ENCODE measurements at regions of chr19 and their contacts with region 1.

Region 1: GRCh38 chr19:49637821-49638738 is 1.9 kb downstream of the RRAS start:
- DNase-seq: peak in 1 of 2 donors; percentile 94
- H3K4me3 ChIP-seq: peak overlapping the region; percentile 78 to 99
- H3K27ac ChIP-seq: peak overlapping the region; percentile 100
- H3K4me1 ChIP-seq: peaks cover 46% of the 10 kb centered on the region
- H3K27me3 ChIP-seq: no peaks in the 10 kb centered on the region
- CTCF ChIP-seq: no peak
- POLR2A ChIP-seq: peak in 1 of 2 donors; percentile 15

Region 2: GRCh38 chr19:49533551-49534488 is 104.3 kb before region 1 on chr19:
- intact Hi-C with region 1: no loop called
- DNase-seq: no peak
- H3K4me3 ChIP-seq: peak overlapping the region; percentile 46 to 67
- H3K27ac ChIP-seq: peak overlapping the region; percentile 9
- H3K4me1 ChIP-seq: peaks cover 20% of the 10 kb centered on the region
- H3K27me3 ChIP-seq: no peaks in the 10 kb centered on the region
- CTCF ChIP-seq: no peak
- POLR2A ChIP-seq: no peak

Region 3: GRCh38 chr19:49593233-49594113 is 44.6 kb before region 1 on chr19:
- intact Hi-C with region 1: loop called (anchors 2 kb)
- DNase-seq: peak in 1 of 2 donors; percentile 95
- H3K4me3 ChIP-seq: peak overlapping the region; percentile 73 to 83
- H3K27ac ChIP-seq: peak overlapping the region; percentile 91
- H3K4me1 ChIP-seq: peaks cover 24% of the 10 kb centered on the region
- H3K27me3 ChIP-seq: no peaks in the 10 kb centered on the region
- CTCF ChIP-seq: no peak
- POLR2A ChIP-seq: no peak

Measured in vagina (tissue), 2 donors.